ENCODE measurements at regions of chr5 and their contacts with region 1.

Region 1: DNA sequence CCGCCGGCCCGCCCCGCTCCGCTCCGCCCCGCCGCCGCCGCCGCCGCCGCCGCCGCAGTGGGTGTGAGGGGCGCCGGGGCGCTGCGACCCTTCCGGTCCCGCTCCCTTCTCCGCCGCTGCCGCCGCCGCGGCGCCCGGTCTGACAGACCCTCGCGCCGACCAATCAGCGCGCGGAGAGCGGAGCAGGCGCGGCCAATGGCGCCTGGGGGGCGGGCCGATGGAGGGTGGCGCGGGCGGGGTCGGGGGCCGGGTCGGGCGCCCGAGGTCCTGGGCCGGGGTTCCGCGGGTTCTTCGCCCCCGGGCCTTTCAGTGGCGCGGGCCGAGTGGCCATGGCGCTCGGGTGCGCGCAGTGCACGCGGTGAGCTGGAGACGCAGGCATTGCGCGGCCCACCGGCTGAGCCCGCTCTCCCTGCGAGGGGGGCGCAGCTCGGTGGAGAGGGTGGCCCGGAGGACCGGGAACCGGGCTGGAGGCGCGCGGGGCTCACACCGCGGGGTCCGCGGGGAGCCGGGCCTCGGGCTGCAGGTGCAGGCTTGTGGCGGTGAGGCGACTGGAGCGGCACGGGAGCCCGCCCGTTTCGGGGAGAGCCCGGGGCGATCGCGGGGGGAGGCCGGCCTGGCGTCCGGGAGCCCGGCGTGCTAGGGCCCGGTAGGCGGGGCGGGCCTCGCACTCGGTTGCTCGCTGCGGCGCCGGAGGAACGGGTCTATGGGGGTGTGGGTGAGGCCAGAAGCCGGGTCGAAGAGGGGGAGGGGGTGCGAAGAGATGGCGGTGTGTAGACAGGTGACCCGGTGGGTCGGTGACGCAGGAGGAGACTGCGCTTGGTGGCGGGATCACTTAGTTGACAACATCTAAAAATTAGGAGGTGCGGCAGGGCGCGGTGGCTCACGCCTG is at the start of gene MAPK9:
- DNase-seq: peak; percentile 69 to 93 (median 82)
- ATAC-seq: peak; percentile 68
- H3K4me3 ChIP-seq: peak within 1 kb of the TSS; percentile 67
- H3K4me3 Mint-ChIP-seq: peak within 1 kb of the TSS; percentile 97
- H3K27ac ChIP-seq: peak within 1 kb of the TSS; percentile 84 to 95
- H3K27ac Mint-ChIP-seq: peak within 1 kb of the TSS; percentile 99
- H3K4me1 ChIP-seq: peaks cover 46% of the 10 kb centered on the region
- H3K4me1 Mint-ChIP-seq: peaks cover 51% of the 10 kb centered on the region
- H3K27me3 ChIP-seq: no peaks in the 10 kb centered on the region
- H3K27me3 Mint-ChIP-seq: no peaks in the 10 kb centered on the region
- CTCF ChIP-seq: no peak
- total RNA-seq, gene MAPK9: 21.2 to 21.7 TPM

Region 2: DNA sequence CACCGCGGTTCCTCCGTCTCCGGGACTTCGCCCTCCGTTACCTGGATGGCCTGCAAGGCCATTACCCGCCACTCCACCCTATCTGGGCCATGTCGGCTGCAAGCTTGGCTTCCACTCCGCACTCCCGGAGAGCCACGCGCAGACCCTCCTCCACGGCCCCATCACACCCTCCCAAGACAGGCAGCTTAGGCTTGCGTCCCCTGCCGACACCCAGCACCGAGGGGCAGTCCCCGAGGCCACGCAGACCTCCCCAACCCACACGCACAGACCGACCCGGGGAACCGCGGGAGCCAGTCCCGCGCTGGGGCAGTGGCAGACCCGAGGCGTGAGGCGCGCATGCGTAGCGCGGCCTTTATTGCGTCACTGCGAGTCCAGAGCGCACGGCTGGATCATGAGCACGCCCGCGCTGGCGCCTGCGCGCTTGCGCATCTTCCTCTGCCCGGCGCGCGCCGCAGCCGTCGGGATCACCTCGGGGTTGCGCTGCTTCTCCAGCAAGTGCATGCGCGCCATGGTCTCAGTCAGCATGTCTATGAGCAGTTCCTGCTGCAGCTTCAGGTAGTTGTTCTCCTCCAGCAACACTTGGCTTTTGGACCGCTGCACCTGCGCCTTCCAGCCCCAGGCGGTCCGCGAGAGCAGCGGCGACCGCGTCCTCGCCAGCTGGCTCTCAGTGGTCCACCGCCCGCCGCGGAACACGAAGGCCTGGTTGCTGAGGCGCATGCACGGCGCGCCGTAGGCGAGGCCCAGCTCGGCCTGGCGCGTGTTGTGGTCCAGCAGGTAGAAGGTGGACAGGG is 613.8 kb before region 1 on chr5:
- CTCF ChIA-PET with region 1: no interaction called
- POLR2A ChIA-PET with region 1: no interaction called
- intact Hi-C with region 1: loop called in 1 of 2 experiments (anchors 5 kb)
- DNase-seq: peak; percentile 83 to 98 (median 92)
- ATAC-seq: peak; percentile 86
- H3K4me3 ChIP-seq: peak overlapping the region; percentile 99
- H3K4me3 Mint-ChIP-seq: peak overlapping the region; percentile 97
- H3K27ac ChIP-seq: peak overlapping the region; percentile 83 to 85
- H3K27ac Mint-ChIP-seq: peak overlapping the region; percentile 98
- H3K4me1 ChIP-seq: peaks cover 36% of the 10 kb centered on the region
- H3K4me1 Mint-ChIP-seq: peaks cover 35% of the 10 kb centered on the region
- H3K27me3 ChIP-seq: no peaks in the 10 kb centered on the region
- H3K27me3 Mint-ChIP-seq: no peaks in the 10 kb centered on the region
- CTCF ChIP-seq: no peak

Region 3: DNA sequence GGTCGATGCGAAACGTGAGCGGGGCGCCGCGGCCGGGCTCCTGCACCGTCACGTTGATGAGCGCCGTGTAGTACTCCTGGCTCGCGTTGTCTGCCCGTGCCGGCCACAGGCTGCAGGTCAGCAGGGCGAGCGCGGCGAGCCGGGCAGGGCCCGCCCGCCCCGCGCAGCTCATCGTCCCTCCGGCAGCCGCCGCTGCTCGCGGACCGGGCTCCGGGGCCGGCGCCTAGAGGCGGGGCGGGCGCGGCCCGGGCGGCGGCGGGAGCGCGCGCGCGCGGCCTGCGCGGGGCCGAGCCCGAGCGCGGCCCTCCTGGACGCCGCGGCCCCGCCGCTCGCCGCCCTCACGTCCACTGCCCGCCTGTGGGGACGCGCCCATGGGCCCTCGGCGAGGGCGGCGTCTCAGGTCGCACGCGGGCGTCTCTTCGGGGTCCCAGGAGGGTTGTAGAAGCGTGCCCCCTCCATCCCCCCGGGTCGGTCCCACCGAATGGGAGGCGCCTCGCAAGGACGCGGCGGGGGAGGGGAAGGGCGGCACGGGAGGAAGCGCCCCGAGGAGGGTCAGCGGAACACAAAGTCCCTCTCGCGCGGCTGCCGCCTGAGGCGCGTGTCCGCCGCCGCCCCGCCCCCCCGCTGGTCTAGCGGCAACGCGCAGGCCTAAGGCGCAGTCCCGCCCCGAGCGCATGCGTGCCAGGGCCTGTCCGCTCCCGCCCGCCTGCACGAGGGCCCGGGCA is 220.5 kb before region 1 on chr5 and contains the start of gene RNF130:
- CTCF ChIA-PET with region 1: no interaction called
- POLR2A ChIA-PET with region 1: no interaction called
- intact Hi-C with region 1: loop called in 1 of 2 experiments (anchors 5 kb)
- DNase-seq: peak; percentile 61 to 92 (median 81)
- ATAC-seq: peak; percentile 66
- H3K4me3 ChIP-seq: peak within 1 kb of the TSS; percentile 65
- H3K4me3 Mint-ChIP-seq: peak within 1 kb of the TSS; percentile 89
- H3K27ac ChIP-seq: peak within 1 kb of the TSS in 1 of 2 donors; percentile 62
- H3K27ac Mint-ChIP-seq: peak within 1 kb of the TSS; percentile 80
- H3K4me1 ChIP-seq: peaks cover 22% of the 10 kb centered on the region
- H3K4me1 Mint-ChIP-seq: peaks cover 38% of the 10 kb centered on the region
- H3K27me3 ChIP-seq: no peaks in the 10 kb centered on the region
- H3K27me3 Mint-ChIP-seq: no peaks in the 10 kb centered on the region
- CTCF ChIP-seq: no peak
- total RNA-seq, gene RNF130: 18.2 to 19.1 TPM

Region 4: GRCh38 chr5:180328296-180329137 is 36.3 kb after region 1 on chr5:
- CTCF ChIA-PET with region 1: interaction called, 34 read pairs
- POLR2A ChIA-PET with region 1: interaction called, 15 read pairs
- intact Hi-C with region 1: loop called (anchors 1 kb)
- DNase-seq: peak; percentile 76 to 92 (median 82)
- ATAC-seq: peak; percentile 90
- H3K4me3 ChIP-seq: no peak overlapping the region
- H3K4me3 Mint-ChIP-seq: no peak overlapping the region
- H3K27ac ChIP-seq: no peak overlapping the region
- H3K27ac Mint-ChIP-seq: no peak overlapping the region
- H3K4me1 ChIP-seq: peaks cover 7% of the 10 kb centered on the region
- H3K4me1 Mint-ChIP-seq: no peaks in the 10 kb centered on the region
- H3K27me3 ChIP-seq: peaks cover 0 to 5% of the 10 kb centered on the region in 2 experiments
- H3K27me3 Mint-ChIP-seq: peaks cover 19% of the 10 kb centered on the region
- CTCF ChIP-seq: peak; percentile 90

Region 5: GRCh38 chr5:180470966-180471582 is 178.9 kb after region 1 on chr5:
- CTCF ChIA-PET with region 1: interaction called, 5 read pairs
- POLR2A ChIA-PET with region 1: no interaction called
- intact Hi-C with region 1: loop called (anchors 1 to 5 kb)
- DNase-seq: peak; percentile 29 to 77 (median 39)
- ATAC-seq: peak; percentile 83
- H3K4me3 ChIP-seq: no peak overlapping the region
- H3K4me3 Mint-ChIP-seq: no peak overlapping the region
- H3K27ac ChIP-seq: no peak overlapping the region
- H3K27ac Mint-ChIP-seq: no peak overlapping the region
- H3K4me1 ChIP-seq: peaks cover 4% of the 10 kb centered on the region
- H3K4me1 Mint-ChIP-seq: no peaks in the 10 kb centered on the region
- H3K27me3 ChIP-seq: peaks cover 0 to 8% of the 10 kb centered on the region in 2 experiments
- H3K27me3 Mint-ChIP-seq: peaks cover 5% of the 10 kb centered on the region
- CTCF ChIP-seq: peak; percentile 91

Region 6: DNA sequence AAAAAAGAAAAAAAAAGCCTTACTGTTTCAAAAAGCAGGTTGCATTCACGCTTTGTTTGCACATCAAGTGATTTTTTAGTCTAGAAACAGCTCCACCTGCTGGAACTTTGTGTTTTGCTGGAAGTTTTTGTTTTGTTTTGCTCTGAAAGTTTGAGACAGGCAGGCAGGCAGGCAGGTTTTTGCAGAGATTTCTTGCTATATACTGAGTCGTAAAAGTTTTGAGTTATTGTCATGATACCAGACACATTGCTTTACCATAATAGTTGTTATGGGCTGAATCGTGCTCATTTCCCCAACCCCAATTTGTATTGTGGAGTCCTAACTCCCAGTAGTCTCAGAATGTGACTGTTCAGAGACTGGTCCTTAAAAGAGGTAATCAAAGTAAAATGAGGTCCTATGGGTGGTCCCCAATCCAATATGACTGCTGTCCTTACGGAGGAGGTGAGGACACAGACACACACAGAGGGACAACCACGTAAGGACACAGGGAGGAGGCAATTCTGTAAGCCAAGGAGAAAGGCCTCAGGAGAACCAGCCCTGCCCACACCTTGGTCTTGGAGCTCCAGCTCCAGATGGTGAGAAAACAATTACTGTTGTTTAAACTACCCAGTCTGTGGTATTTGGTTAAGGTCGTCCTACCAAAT is 426.7 kb after region 1 on chr5:
- CTCF ChIA-PET with region 1: no interaction called
- POLR2A ChIA-PET with region 1: no interaction called
- intact Hi-C with region 1: loop called in 1 of 2 experiments (anchors 5 kb)
- DNase-seq: peak in 12 of 14 experiments; percentile 5 to 69 (median 24)
- ATAC-seq: no peak
- H3K4me3 ChIP-seq: no peak overlapping the region
- H3K4me3 Mint-ChIP-seq: no peak overlapping the region
- H3K27ac ChIP-seq: no peak overlapping the region
- H3K27ac Mint-ChIP-seq: no peak overlapping the region
- H3K4me1 ChIP-seq: no peaks in the 10 kb centered on the region
- H3K4me1 Mint-ChIP-seq: peaks cover 13% of the 10 kb centered on the region
- H3K27me3 ChIP-seq: no peaks in the 10 kb centered on the region
- H3K27me3 Mint-ChIP-seq: no peaks in the 10 kb centered on the region
- CTCF ChIP-seq: peak; percentile 86

Measured in CD4-positive, alpha-beta T cell (primary cell).